B cell (primary cell): ENCODE measurements at regions of chr11 and their contacts with region 1.

Region 1: DNA sequence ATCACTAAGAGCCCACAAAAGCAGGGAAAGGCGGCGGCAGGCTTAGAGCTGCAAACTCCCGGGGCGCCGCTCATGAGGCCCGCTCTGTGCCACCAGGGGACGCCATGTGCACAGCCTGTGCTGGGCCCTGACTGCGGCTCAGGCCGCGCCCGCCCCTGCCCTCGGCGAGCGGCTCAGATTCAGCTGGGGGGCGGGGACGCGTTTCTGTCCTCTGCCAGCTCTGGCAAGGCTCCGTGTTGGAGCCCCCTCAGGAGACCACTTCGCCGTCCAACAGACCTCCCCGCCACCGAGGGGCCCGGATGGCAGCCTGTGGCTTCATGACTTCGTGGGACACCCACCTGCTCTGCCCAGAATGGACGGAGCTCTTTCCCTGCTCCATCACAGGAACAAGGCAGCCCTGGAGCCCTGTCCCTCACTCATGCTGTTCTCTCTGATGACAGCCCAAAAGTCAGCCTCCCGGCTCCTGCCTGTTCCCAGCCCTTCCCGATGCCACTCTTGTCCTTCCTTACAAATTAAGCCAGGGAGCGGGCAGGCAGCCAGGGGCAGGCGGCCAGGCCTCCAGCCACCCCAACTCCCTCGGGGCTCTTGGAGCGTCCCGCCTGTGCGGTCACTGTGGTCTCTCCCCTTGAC is 69.1 kb downstream of the NAT10 start:
- DNase-seq: peak; percentile 84
- ATAC-seq: peak; percentile 100
- H3K4me3 ChIP-seq: peak overlapping the region in 2 of 5 experiments; percentile 12 to 33
- H3K4me3 Mint-ChIP-seq: peak overlapping the region; percentile 49
- H3K27ac ChIP-seq: no peak overlapping the region
- H3K27ac Mint-ChIP-seq: no peak overlapping the region
- H3K4me1 ChIP-seq: peaks cover 0 to 11% of the 10 kb centered on the region in 2 donors
- H3K4me1 Mint-ChIP-seq: peaks cover 5% of the 10 kb centered on the region
- H3K27me3 ChIP-seq: peaks cover 0 to 11% (median 0%) of the 10 kb centered on the region in 4 experiments
- H3K27me3 Mint-ChIP-seq: no peaks in the 10 kb centered on the region
- CTCF ChIP-seq: peak; percentile 89

Region 2: DNA sequence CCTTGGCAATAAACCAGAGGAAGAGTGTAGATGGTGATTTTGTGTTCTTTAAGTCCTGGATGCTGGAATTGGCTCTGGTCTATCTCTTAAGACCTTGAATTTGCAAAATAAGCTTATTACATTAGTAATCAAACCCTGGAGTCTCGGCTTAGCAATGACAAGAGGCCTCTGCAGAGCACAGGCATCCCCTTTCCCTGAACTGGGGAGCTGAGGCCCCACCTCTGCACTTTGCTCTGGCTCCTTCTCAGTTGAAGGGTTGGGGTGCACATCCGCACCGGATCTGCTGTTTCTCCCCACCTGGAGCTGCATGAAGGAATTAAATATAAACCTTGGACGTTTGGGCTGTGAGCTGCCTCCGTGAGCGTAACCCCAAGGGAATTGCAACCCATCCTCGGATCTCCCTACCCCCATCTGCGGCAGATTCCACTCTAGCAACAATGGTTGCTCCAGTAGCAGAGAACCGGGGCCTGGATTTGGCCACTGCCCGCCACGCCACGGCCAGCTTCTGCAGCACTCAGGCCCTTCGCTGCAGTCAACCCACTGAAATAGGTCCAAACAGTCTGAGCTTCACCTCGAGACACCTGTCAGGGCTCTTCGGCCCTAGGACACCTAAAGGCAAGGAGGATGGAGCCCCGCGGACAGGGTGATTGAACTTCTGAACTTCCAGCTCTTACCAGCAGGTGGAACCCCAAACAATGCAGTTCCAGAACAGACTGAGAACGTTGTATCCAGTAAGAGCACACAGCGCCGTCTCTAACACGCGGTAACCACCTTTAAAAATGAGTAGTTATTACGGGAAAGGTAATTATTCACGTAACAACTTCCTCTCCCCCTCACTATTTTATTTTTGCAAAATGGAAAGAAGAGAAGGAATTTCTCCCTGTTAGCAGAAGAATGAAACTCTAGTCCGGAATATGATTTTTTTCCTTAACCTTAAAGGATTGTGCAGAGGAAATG is 177.8 kb before region 1 on chr11:
- CTCF ChIA-PET with region 1: interaction called, 23 read pairs
- POLR2A ChIA-PET with region 1: no interaction called
- intact Hi-C with region 1: loop called (anchors 1 kb)
- DNase-seq: peak; percentile 85
- ATAC-seq: peak; percentile 98
- H3K4me3 ChIP-seq: no peak overlapping the region
- H3K4me3 Mint-ChIP-seq: peak overlapping the region; percentile 6
- H3K27ac ChIP-seq: no peak overlapping the region
- H3K27ac Mint-ChIP-seq: no peak overlapping the region
- H3K4me1 ChIP-seq: peaks cover 8 to 13% of the 10 kb centered on the region in 2 donors
- H3K4me1 Mint-ChIP-seq: peaks cover 13% of the 10 kb centered on the region
- H3K27me3 ChIP-seq: peaks cover 0 to 27% (median 13%) of the 10 kb centered on the region in 4 experiments
- H3K27me3 Mint-ChIP-seq: peaks cover 23% of the 10 kb centered on the region
- CTCF ChIP-seq: peak; percentile 85

Region 3: DNA sequence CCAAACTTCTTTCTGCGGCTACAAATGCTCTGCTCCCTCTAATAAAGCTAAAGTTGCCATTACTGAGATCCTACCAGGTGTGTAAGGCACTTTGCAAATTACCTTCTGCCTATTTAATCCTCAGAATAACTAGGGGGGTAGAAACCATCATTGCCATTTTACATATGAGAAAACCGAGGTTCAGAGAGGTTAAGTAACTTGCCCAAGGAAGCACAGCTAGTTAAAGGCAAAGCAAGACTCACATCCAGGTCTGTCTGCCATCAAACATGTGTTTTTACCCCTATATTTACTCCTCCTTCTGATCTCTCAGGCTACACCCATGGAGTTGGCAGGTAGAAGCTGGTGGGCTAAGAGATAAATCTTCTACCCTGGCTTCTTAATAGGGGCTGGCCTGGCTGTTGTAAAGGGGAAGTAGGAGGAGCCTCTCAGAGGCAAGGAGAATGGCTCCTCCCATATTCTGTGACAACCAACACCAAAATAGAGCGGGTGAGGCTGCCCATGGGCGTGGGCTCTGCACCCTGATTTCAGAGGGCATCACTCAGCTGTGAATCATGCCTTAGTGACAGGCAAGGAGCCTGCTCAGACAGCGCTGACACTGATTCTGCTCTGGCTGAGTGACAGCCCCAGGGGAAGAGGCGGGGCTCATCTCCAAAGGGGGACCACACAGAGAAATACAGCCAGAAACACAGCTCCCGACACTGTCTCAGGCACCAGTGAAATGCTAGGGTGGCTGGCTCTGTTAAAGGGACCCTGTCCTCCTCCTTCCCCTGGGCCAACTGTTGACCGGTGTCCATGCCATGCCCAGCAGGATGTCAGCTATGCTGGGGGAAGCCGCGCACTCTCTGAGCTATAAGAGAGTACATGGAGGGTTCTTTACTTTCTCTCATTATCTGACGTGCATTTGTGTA is 76.5 kb after region 1 on chr11:
- CTCF ChIA-PET with region 1: interaction called, 10 read pairs
- POLR2A ChIA-PET with region 1: interaction called, 5 read pairs
- intact Hi-C with region 1: loop called (anchors 2 kb)
- DNase-seq: peak; percentile 93
- ATAC-seq: peak; percentile 99
- H3K4me3 ChIP-seq: peak overlapping the region in 4 of 5 experiments; percentile 13 to 59 (median 46)
- H3K4me3 Mint-ChIP-seq: peak overlapping the region; percentile 47
- H3K27ac ChIP-seq: peak overlapping the region; percentile 67 to 76
- H3K27ac Mint-ChIP-seq: peak overlapping the region; percentile 72
- H3K4me1 ChIP-seq: peaks cover 19 to 26% of the 10 kb centered on the region in 2 donors
- H3K4me1 Mint-ChIP-seq: peaks cover 36% of the 10 kb centered on the region
- H3K27me3 ChIP-seq: no peaks in the 10 kb centered on the region
- H3K27me3 Mint-ChIP-seq: no peaks in the 10 kb centered on the region
- CTCF ChIP-seq: no peak

Region 4: GRCh38 chr11:34351687-34352469 is 177.4 kb after region 1 on chr11:
- CTCF ChIA-PET with region 1: interaction called, 129 read pairs
- POLR2A ChIA-PET with region 1: no interaction called
- intact Hi-C with region 1: no loop called
- DNase-seq: peak; percentile 32
- ATAC-seq: peak; percentile 41
- H3K4me3 ChIP-seq: no peak overlapping the region
- H3K4me3 Mint-ChIP-seq: no peak overlapping the region
- H3K27ac ChIP-seq: no peak overlapping the region
- H3K27ac Mint-ChIP-seq: no peak overlapping the region
- H3K4me1 ChIP-seq: peaks cover 18% of the 10 kb centered on the region in 2 donors
- H3K4me1 Mint-ChIP-seq: peaks cover 29% of the 10 kb centered on the region
- H3K27me3 ChIP-seq: peaks cover 0 to 42% (median 31%) of the 10 kb centered on the region in 4 experiments
- H3K27me3 Mint-ChIP-seq: peaks cover 28% of the 10 kb centered on the region
- CTCF ChIP-seq: no peak

Region 5: DNA sequence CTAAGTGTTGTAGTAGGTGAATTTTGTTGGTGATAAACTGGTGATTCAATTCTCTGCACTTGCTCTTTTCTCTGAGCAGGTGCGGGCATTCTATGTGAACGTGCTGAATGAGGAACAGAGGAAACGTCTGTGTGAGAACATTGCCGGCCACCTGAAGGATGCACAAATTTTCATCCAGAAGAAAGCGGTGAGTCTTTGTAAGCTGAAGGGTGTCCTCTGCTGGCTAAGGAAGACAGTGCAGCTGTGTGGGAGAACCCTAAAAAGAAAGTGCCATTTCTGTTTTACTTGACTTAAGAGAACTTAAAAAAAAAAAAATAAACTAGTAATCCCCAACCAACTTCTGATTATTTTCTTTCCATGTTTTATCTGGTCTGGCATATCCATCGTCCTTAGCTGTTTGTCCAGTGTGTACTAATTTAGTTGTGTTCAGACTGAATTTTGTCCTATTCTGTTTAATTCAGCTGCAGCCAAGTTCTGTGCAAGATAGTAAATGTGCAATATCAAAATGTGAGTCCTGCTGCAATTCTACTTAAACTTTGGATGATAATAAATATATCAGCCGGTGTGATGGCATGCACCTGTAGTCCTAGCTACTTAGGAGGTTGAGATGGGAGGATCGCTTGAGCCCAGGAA is 293.8 kb after region 1 on chr11:
- CTCF ChIA-PET with region 1: interaction called, 22 read pairs
- POLR2A ChIA-PET with region 1: no interaction called
- intact Hi-C with region 1: loop called (anchors 1 kb)
- DNase-seq: peak; percentile 37
- ATAC-seq: peak; percentile 65
- H3K4me3 ChIP-seq: no peak overlapping the region
- H3K4me3 Mint-ChIP-seq: no peak overlapping the region
- H3K27ac ChIP-seq: no peak overlapping the region
- H3K27ac Mint-ChIP-seq: no peak overlapping the region
- H3K4me1 ChIP-seq: no peaks in the 10 kb centered on the region
- H3K4me1 Mint-ChIP-seq: peaks cover 4% of the 10 kb centered on the region
- H3K27me3 ChIP-seq: no peaks in the 10 kb centered on the region
- H3K27me3 Mint-ChIP-seq: no peaks in the 10 kb centered on the region
- CTCF ChIP-seq: peak; percentile 67